ENCODE measurements at regions of chr15 and their contacts with region 1.

Region 1: DNA sequence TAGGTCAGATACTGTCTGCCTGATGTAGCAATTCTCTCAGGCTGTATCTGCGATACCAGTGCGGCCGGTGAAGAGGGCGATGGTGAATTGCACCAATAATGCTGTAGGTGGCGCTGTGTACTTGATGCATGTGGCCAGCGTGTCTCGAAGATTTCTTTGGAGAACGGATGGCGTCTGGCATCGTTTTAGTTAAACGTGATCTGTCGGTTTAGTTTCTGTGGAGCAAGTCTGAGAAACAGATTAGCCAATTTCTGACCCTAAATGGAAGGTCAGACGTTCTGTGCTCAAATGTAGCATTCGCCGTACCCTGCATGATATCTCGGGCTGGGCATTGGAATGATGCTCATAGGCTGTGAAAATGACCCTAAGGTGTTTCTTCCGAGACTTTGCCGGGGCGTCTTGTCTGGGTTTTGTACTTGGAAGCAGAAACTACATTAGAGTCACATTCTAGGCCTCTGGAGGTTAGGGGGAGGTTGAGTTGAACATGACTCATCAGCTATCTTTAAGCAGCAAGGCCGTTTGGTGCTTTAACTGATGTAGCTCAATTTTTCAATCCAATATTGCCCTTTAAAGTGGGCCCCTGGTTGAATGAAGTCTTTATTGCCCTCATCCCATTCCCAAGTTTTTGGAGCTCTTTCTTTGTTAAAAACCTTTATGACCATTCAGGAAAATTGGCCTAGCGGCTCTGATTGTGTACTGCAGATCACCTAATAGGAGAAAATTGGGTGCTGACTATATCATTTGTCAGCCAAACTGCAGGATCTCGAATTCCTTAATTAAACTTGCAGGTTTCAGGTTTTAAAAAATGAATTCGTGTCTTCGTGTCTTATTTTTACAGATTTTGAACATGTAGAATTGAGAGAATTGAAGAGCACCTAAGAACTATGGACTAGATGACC is 80.0 kb downstream of the SQOR start:
- DNase-seq: peak; percentile 46 to 63
- ATAC-seq: peak; percentile 61 to 86 (median 80)
- H3K4me3 ChIP-seq: peak overlapping the region in 1 of 10 donors; percentile 31
- H3K27ac ChIP-seq: peak overlapping the region in 1 of 10 donors; percentile 23
- H3K4me1 ChIP-seq: peaks cover 0 to 16% (median 4%) of the 10 kb centered on the region in 9 donors
- H3K27me3 ChIP-seq: peaks cover 0 to 12% (median 0%) of the 10 kb centered on the region in 7 donors
- CTCF ChIP-seq: peak; percentile 79 to 95 (median 91)

Region 2: GRCh38 chr15:45743426-45744235 is 28.8 kb after region 1 on chr15:
- intact Hi-C with region 1: no loop called
- DNase-seq: peak in 1 of 2 donors; percentile 23
- ATAC-seq: peak in 6 of 8 donors; percentile 49 to 87 (median 70)
- H3K4me3 ChIP-seq: peak overlapping the region in 3 of 10 donors; percentile 14 to 39 (median 31)
- H3K27ac ChIP-seq: peak overlapping the region in 5 of 10 donors; percentile 2 to 67 (median 20)
- H3K4me1 ChIP-seq: peaks cover 0 to 18% (median 0%) of the 10 kb centered on the region in 9 donors
- H3K27me3 ChIP-seq: no peaks in the 10 kb centered on the region
- CTCF ChIP-seq: no peak

Region 3: GRCh38 chr15:45790325-45790943 is 75.6 kb after region 1 on chr15:
- intact Hi-C with region 1: loop called (anchors 1 to 5 kb)
- DNase-seq: peak in 1 of 2 donors; percentile 40
- ATAC-seq: peak in 5 of 8 donors; percentile 50 to 68 (median 59)
- H3K4me3 ChIP-seq: no peak overlapping the region
- H3K27ac ChIP-seq: no peak overlapping the region
- H3K4me1 ChIP-seq: peaks cover 0 to 3% (median 0%) of the 10 kb centered on the region in 9 donors
- H3K27me3 ChIP-seq: peaks cover 0 to 6% (median 0%) of the 10 kb centered on the region in 7 donors
- CTCF ChIP-seq: peak in 8 of 9 donors; percentile 39 to 79 (median 68)

Region 4: GRCh38 chr15:45903283-45903682 is 188.4 kb after region 1 on chr15:
- intact Hi-C with region 1: no loop called
- DNase-seq: no peak
- ATAC-seq: no peak
- H3K4me3 ChIP-seq: no peak overlapping the region
- H3K27ac ChIP-seq: no peak overlapping the region
- H3K4me1 ChIP-seq: peaks cover 0 to 5% (median 0%) of the 10 kb centered on the region in 9 donors
- H3K27me3 ChIP-seq: no peaks in the 10 kb centered on the region
- CTCF ChIP-seq: no peak

Region 5: DNA sequence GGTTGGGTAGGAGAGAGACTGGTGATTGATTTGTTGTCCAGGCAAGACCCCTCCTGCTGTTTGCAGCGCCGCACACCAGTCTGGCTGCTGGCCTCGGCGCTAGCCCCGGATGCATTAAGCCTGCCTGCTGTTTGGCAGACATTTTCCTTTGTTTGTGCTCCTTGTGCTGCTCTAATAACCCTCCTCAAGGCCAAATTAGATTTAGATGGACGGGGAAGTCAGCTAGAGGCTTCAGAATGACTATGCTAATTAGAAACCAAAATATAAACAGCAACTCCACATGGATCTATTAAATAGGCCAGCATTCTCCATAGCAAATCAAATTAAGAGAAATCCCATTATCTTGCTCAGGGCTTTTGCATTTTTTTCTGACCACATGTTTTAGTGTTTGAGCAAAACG is 365.2 kb after region 1 on chr15:
- intact Hi-C with region 1: loop called in 1 of 10 experiments (anchors 10 kb)
- DNase-seq: no peak
- ATAC-seq: peak in 5 of 8 donors; percentile 30 to 69 (median 50)
- H3K4me3 ChIP-seq: no peak overlapping the region
- H3K27ac ChIP-seq: peak overlapping the region in 3 of 10 donors; percentile 23 to 56 (median 53)
- H3K4me1 ChIP-seq: peaks cover 0 to 22% (median 4%) of the 10 kb centered on the region in 9 donors
- H3K27me3 ChIP-seq: no peaks in the 10 kb centered on the region
- CTCF ChIP-seq: no peak

Region 6: GRCh38 chr15:46304320-46304719 is 589.5 kb after region 1 on chr15:
- intact Hi-C with region 1: loop called in 1 of 10 experiments (anchors 10 kb)
- DNase-seq: no peak
- ATAC-seq: no peak
- H3K4me3 ChIP-seq: no peak overlapping the region
- H3K27ac ChIP-seq: no peak overlapping the region
- H3K4me1 ChIP-seq: peaks cover 0 to 4% (median 0%) of the 10 kb centered on the region in 9 donors
- H3K27me3 ChIP-seq: peaks cover 0 to 7% (median 0%) of the 10 kb centered on the region in 7 donors
- CTCF ChIP-seq: peak in 3 of 9 donors; percentile 27 to 34 (median 28)

Region 7: DNA sequence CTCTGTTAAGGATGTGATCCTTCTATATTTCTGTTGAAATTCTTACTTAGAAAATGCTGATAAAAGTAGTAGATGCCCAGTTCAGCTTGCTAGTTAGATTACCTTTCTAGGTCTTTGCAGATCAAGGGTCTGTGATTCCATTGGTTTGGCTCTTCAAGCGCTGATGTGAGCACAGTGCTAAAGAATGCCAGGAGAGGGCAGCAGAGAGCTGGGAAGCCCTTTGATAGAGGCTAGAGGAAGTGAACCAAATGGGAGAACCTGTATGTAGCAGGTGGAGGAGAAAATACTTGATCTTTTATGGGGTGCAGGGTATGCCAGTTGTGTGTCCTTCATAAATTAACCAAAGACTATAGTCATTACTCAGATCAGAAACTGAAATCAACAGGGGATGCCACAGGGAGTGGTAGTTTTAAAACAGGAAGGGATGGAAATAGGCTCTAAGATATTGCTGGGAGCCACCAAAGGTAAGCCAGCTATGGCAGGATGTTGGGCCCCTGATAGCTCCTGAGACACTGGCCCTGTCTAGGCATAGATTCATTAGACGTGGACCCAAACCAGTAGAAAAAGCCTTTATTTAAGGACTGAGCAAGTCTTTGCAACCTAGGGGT is 597.4 kb after region 1 on chr15:
- intact Hi-C with region 1: loop called in 2 of 10 experiments (anchors 10 kb)
- DNase-seq: peak; percentile 54 to 73
- ATAC-seq: peak; percentile 70 to 93 (median 81)
- H3K4me3 ChIP-seq: no peak overlapping the region
- H3K27ac ChIP-seq: no peak overlapping the region
- H3K4me1 ChIP-seq: peaks cover 0 to 16% (median 9%) of the 10 kb centered on the region in 9 donors
- H3K27me3 ChIP-seq: peaks cover 0 to 3% (median 0%) of the 10 kb centered on the region in 7 donors
- CTCF ChIP-seq: peak; percentile 70 to 96 (median 91)

Measured in heart right ventricle (tissue), 16 donors.